CD14-positive monocyte (primary cell): ENCODE measurements at regions of chr5 and their contacts with region 1.

Region 1: GRCh38 chr5:142012792-142013388 is at the start of gene GNPDA1:
- DNase-seq: peak; percentile 66 to 84 (median 80)
- H3K4me3 ChIP-seq: peak within 1 kb of the TSS; percentile 62 to 80 (median 67)
- H3K4me3 Mint-ChIP-seq: peak within 1 kb of the TSS; percentile 79 to 92
- H3K27ac ChIP-seq: peak within 1 kb of the TSS; percentile 64 to 93
- H3K27ac Mint-ChIP-seq: peak within 1 kb of the TSS; percentile 83 to 98 (median 94)
- H3K4me1 ChIP-seq: peaks cover 40 to 47% of the 10 kb centered on the region in 2 donors
- H3K4me1 Mint-ChIP-seq: peaks cover 49% of the 10 kb centered on the region
- H3K27me3 ChIP-seq: no peaks in the 10 kb centered on the region
- H3K27me3 Mint-ChIP-seq: peaks cover 0 to 2% (median 0%) of the 10 kb centered on the region in 3 donors
- CTCF ChIP-seq: no peak
- polyA plus RNA-seq, gene GNPDA1: 14.6 to 47.6 (median 24.3) TPM

Region 2: DNA sequence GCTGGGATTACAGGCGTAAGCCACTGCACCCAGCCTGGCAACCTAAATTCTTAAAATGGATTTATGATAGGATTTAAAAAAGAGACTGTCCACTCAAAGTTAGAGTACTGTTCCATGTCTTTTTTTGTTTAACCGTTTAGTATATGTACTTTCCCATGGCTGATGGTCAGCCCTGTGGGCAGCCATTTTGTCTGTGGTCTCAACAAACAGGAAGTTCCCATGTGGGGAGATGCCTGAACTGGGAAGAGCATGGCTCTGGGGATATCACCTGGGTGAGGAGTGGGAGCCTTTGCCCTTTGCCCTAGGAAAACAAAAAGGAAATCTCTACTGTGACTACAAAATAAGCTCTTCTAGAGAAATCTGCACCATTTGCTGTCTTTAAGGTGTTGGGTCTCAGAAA is 27.4 kb after region 1 on chr5:
- intact Hi-C with region 1: no loop called
- DNase-seq: no peak
- H3K4me3 ChIP-seq: no peak overlapping the region
- H3K4me3 Mint-ChIP-seq: no peak overlapping the region
- H3K27ac ChIP-seq: no peak overlapping the region
- H3K27ac Mint-ChIP-seq: peak overlapping the region in 1 of 7 donors; percentile 20
- H3K4me1 ChIP-seq: peaks cover under 1 to 6% of the 10 kb centered on the region in 2 donors
- H3K4me1 Mint-ChIP-seq: peaks cover 6% of the 10 kb centered on the region
- H3K27me3 ChIP-seq: no peaks in the 10 kb centered on the region
- H3K27me3 Mint-ChIP-seq: peaks cover 4 to 8% (median 8%) of the 10 kb centered on the region in 3 donors
- CTCF ChIP-seq: no peak

Region 3: GRCh38 chr5:142053426-142054151 is 40.7 kb after region 1 on chr5:
- intact Hi-C with region 1: loop called in 1 of 2 experiments (anchors 5 kb)
- DNase-seq: peak; percentile 76 to 90 (median 89)
- H3K4me3 ChIP-seq: peak overlapping the region in 1 of 3 experiments; percentile 20
- H3K4me3 Mint-ChIP-seq: peak overlapping the region in 1 of 2 donors; percentile 78
- H3K27ac ChIP-seq: peak overlapping the region; percentile 51 to 71
- H3K27ac Mint-ChIP-seq: peak overlapping the region; percentile 69 to 94 (median 91)
- H3K4me1 ChIP-seq: peaks cover 34 to 36% of the 10 kb centered on the region in 2 donors
- H3K4me1 Mint-ChIP-seq: peaks cover 35% of the 10 kb centered on the region
- H3K27me3 ChIP-seq: no peaks in the 10 kb centered on the region
- H3K27me3 Mint-ChIP-seq: peaks cover 1 to 4% (median 3%) of the 10 kb centered on the region in 3 donors
- CTCF ChIP-seq: no peak

Region 4: GRCh38 chr5:142108432-142109330 is 95.8 kb after region 1 on chr5 and contains the start of gene NDFIP1:
- intact Hi-C with region 1: loop called in 1 of 2 experiments (anchors 5 kb)
- DNase-seq: peak; percentile 66 to 76 (median 67)
- H3K4me3 ChIP-seq: peak within 1 kb of the TSS; percentile 90 to 98 (median 96)
- H3K4me3 Mint-ChIP-seq: peak within 1 kb of the TSS; percentile 93 to 100
- H3K27ac ChIP-seq: peak within 1 kb of the TSS; percentile 79 to 86
- H3K27ac Mint-ChIP-seq: peak within 1 kb of the TSS; percentile 85 to 94 (median 88)
- H3K4me1 ChIP-seq: peaks cover 16 to 28% of the 10 kb centered on the region in 2 donors
- H3K4me1 Mint-ChIP-seq: peaks cover 33% of the 10 kb centered on the region
- H3K27me3 ChIP-seq: no peaks in the 10 kb centered on the region
- H3K27me3 Mint-ChIP-seq: peaks cover 0 to 3% (median 1%) of the 10 kb centered on the region in 3 donors
- CTCF ChIP-seq: no peak
- polyA plus RNA-seq, gene NDFIP1: 18.4 to 44.4 (median 44.0) TPM

Region 5: GRCh38 chr5:142221091-142221860 is 208.4 kb after region 1 on chr5:
- intact Hi-C with region 1: loop called in 1 of 2 experiments (anchors 10 kb)
- DNase-seq: peak in 2 of 3 donors; percentile 16 to 56
- H3K4me3 ChIP-seq: peak overlapping the region in 1 of 3 experiments; percentile 64
- H3K4me3 Mint-ChIP-seq: peak overlapping the region in 1 of 2 donors; percentile 72
- H3K27ac ChIP-seq: no peak overlapping the region
- H3K27ac Mint-ChIP-seq: peak overlapping the region in 6 of 7 donors; percentile 40 to 84 (median 77)
- H3K4me1 ChIP-seq: peaks cover 38 to 42% of the 10 kb centered on the region in 2 donors
- H3K4me1 Mint-ChIP-seq: peaks cover 37% of the 10 kb centered on the region
- H3K27me3 ChIP-seq: peaks cover 2 to 4% of the 10 kb centered on the region in 2 donors
- H3K27me3 Mint-ChIP-seq: peaks cover 15 to 35% (median 33%) of the 10 kb centered on the region in 3 donors
- CTCF ChIP-seq: no peak

Region 6: GRCh38 chr5:142290577-142291299 is 277.8 kb after region 1 on chr5:
- intact Hi-C with region 1: no loop called
- DNase-seq: no peak
- H3K4me3 ChIP-seq: no peak overlapping the region
- H3K4me3 Mint-ChIP-seq: no peak overlapping the region
- H3K27ac ChIP-seq: no peak overlapping the region
- H3K27ac Mint-ChIP-seq: peak overlapping the region in 1 of 7 donors; percentile 20
- H3K4me1 ChIP-seq: no peaks in the 10 kb centered on the region
- H3K4me1 Mint-ChIP-seq: peaks cover 4% of the 10 kb centered on the region
- H3K27me3 ChIP-seq: peaks cover 0 to 3% of the 10 kb centered on the region in 2 donors
- H3K27me3 Mint-ChIP-seq: peaks cover 5 to 33% (median 15%) of the 10 kb centered on the region in 3 donors
- CTCF ChIP-seq: no peak